ENCODE measurements at regions of chr14 and their contacts with region 1.

Region 1: DNA sequence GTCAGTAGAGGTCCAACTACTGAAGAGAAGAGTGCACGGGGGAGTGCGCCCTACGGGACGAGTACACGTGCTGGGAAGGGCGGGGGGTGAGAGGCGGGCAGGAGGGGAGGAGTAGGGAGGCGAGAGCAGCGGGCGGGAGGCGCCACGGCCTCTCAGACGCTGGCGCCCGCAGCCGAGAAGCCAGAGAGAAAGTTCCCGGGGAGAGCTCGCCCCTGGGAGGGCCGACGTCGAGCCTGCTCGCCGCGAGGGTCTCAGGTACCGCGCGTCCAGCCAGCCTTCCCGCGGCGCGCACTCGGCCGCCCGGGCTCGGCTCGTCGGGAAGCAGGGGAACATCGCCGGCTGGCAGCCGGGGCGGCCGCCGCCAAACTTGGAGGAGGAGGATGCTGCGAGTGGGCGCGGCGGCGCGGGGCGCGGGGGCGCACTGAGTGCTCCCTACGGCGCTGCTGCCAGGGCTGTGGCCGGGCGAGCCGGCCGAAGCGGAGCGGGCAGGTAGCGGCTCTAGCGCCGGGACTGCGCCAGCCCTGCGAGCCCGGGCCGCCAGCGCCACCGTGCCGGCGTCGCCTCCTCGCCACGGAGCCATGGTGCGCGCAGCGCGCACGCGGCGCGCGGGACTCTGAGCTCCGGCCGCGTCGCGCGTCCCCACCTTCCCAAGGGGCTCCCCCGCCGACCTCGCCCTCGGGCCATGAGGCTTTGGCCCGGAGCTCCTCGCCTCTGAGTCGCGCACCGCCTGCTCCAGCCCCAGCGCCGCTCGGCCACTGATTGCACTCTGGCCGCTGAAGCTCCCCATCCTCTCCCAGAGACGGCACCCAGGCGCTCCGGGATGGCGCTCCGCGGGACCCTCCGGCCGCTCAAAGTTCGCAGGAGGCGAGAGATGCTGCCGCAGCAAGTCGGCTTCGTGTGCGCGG is at the start of gene SLC24A4:
- DNase-seq: peak in 3 of 9 donors; percentile 3 to 30 (median 12)
- ATAC-seq: no peak
- H3K4me3 ChIP-seq: no peak within 1 kb of the TSS
- H3K4me3 Mint-ChIP-seq: peak within 1 kb of the TSS; percentile 53 to 82 (median 70)
- H3K27ac ChIP-seq: no peak within 1 kb of the TSS
- H3K27ac Mint-ChIP-seq: no peak within 1 kb of the TSS
- H3K4me1 ChIP-seq: no peaks in the 10 kb centered on the region
- H3K4me1 Mint-ChIP-seq: peaks cover 0 to 7% (median 3%) of the 10 kb centered on the region in 7 donors
- H3K27me3 ChIP-seq: no peaks in the 10 kb centered on the region
- H3K27me3 Mint-ChIP-seq: peaks cover 53 to 83% (median 67%) of the 10 kb centered on the region in 5 donors
- total RNA-seq, gene SLC24A4: 0.10 to 15.3 (median 2.1) TPM in 3 of 5 experiments, not detected in the others

Region 2: GRCh38 chr14:92254786-92255185 is 68.5 kb before region 1 on chr14:
- CTCF ChIA-PET with region 1: no interaction called
- POLR2A ChIA-PET with region 1: no interaction called
- intact Hi-C with region 1: loop called in 1 of 2 experiments (anchors 10 kb)
- DNase-seq: no peak
- ATAC-seq: no peak
- H3K4me3 ChIP-seq: no peak overlapping the region
- H3K4me3 Mint-ChIP-seq: peak overlapping the region in 4 of 10 donors; percentile 9 to 44 (median 36)
- H3K27ac ChIP-seq: no peak overlapping the region
- H3K27ac Mint-ChIP-seq: no peak overlapping the region
- H3K4me1 ChIP-seq: no peaks in the 10 kb centered on the region
- H3K4me1 Mint-ChIP-seq: peaks cover 5 to 24% (median 12%) of the 10 kb centered on the region in 7 donors
- H3K27me3 ChIP-seq: peaks cover 0 to 8% of the 10 kb centered on the region in 2 donors
- H3K27me3 Mint-ChIP-seq: peaks cover 40 to 69% (median 53%) of the 10 kb centered on the region in 5 donors

Region 3: GRCh38 chr14:92686900-92687444 is 363.7 kb after region 1 on chr14:
- CTCF ChIA-PET with region 1: no interaction called
- POLR2A ChIA-PET with region 1: no interaction called
- intact Hi-C with region 1: loop called in 1 of 2 experiments (anchors 10 kb)
- DNase-seq: peak; percentile 20 to 84 (median 52)
- ATAC-seq: peak; percentile 89
- H3K4me3 ChIP-seq: no peak overlapping the region
- H3K4me3 Mint-ChIP-seq: no peak overlapping the region
- H3K27ac ChIP-seq: no peak overlapping the region
- H3K27ac Mint-ChIP-seq: peak overlapping the region in 2 of 9 donors; percentile 43
- H3K4me1 ChIP-seq: no peaks in the 10 kb centered on the region
- H3K4me1 Mint-ChIP-seq: peaks cover 0 to 5% (median 0%) of the 10 kb centered on the region in 7 donors
- H3K27me3 ChIP-seq: no peaks in the 10 kb centered on the region
- H3K27me3 Mint-ChIP-seq: no peaks in the 10 kb centered on the region

Measured in naive thymus-derived CD4-positive, alpha-beta T cell (primary cell).